ENCODE measurements at regions of chr6 and their contacts with region 1.

Region 1: DNA sequence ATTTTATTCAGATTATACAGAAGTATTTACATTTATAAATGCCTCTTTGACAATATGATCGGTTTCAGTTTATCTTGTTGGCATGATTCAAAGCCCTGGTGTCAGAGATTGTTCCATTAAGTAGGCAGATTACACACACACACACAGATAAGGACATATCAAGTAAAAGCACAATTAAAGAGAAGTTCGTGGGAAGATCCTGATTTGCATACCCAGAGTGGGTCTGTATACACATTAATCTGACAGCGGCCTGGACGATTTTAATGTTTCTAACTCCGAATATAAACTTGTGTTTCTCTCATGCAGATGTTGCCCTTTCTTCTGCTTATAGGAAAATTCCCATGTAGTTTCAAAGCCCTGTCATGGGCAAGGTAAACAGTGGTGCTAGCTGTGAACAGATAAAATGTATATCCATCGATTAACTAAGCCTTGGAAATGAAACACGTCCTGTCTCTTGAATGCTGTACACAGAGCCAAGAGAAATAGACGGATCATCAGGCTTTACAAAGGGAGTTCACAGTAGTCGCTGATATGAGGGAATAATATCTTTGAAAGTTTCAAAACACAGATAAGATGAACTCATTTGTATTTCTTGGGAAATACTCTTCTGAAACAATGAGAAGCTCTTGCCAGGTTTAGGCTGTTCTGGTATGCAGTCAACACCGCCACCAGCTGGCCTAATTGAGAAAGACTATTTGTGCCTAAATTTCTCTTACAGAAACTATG is 108.2 kb upstream of the GMDS start:
- DNase-seq: peak; percentile 80
- ATAC-seq: no peak
- H3K4me3 Mint-ChIP-seq: no peak overlapping the region
- H3K27ac Mint-ChIP-seq: no peak overlapping the region
- H3K4me1 Mint-ChIP-seq: no peaks in the 10 kb centered on the region
- H3K27me3 Mint-ChIP-seq: no peaks in the 10 kb centered on the region

Region 2: DNA sequence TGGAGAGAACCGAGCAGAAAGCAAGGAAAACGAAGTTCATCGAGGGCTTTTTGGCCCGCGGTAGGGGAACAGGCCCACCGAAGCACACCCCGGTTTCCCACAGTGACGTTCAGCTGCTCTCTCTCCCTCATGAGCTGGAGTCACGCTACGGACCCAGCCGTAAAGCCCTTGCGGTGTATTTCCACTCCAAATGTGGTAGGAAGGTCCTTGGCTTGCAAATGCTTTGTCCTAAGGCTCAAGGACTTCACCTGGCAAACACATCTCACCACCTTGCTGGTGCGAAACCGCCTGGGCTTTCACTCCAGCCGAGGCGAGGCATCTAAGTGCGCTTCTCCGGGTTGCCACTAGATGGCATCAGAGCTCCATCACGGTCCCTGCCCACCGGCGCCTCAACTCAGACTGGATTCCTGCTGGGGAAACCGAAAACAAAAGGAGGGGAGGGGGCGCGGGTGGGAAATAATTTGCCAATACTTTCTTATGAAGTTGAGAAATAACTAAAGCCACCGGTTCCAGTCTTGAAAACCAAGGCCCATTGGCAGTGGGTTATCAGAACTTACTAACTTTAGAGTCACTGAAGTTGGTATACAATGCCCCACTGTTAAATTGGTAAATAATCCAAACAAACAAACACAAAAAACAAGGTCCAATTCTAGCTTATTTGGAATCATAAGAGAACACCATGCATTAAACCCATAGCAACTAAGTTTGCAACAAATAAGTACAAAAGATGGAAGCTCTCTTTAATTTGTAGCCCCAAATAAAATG is 757.3 kb before region 1 on chr6:
- CTCF ChIA-PET with region 1: interaction called, 31 read pairs
- POLR2A ChIA-PET with region 1: no interaction called
- intact Hi-C with region 1: loop called in 1 of 2 experiments (anchors 2 kb)
- DNase-seq: peak; percentile 78
- ATAC-seq: peak; percentile 88
- H3K4me3 Mint-ChIP-seq: no peak overlapping the region
- H3K27ac Mint-ChIP-seq: no peak overlapping the region
- H3K4me1 Mint-ChIP-seq: peaks cover 2% of the 10 kb centered on the region
- H3K27me3 Mint-ChIP-seq: peaks cover 48% of the 10 kb centered on the region

Region 3: DNA sequence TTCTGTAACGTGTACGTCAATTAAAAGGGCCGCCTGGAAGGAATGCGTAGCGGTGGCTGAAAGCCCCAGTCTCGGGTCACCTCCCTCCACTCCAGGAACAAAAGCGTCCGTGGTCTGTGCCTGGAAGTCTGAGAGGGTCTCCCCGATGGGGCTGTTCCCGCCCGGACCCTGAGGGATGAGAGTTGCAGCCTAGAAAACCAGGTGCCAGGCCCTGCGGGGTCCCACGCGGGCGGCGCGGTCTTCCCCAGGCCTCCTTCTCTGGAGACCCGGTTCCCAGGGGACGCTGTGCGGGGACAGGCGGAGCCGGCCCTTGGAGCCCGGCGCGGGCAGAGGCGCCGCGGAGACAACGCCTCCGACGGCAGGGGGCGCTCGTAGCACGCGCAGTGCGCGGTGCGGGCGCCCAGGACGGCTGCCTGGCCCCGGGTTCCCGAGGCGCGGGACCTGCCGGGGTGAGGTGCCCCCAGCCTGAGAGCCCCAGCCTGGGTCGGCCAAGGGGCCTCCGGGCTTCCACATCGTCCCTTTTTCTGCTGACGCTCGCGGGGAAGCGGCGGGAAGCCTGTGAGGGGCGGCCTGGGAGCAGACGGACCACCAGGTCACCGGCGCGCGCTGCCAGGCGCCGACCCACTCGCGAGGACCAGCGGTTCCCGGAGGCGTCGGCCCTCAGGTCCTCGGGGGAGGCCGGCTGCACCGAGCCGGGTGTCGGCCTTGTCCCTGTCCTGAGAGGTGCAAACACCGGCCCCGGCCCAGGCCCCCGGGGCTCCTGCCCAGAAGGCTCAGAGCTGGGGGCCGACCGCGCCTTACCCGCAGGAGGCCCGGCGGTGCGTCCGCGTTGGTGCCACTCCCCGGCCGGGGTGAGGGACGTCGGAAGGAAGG is 749.2 kb before region 1 on chr6:
- CTCF ChIA-PET with region 1: interaction called, 16 read pairs
- POLR2A ChIA-PET with region 1: no interaction called
- intact Hi-C with region 1: loop called (anchors 1 kb)
- DNase-seq: peak; percentile 82
- ATAC-seq: peak; percentile 84
- H3K4me3 Mint-ChIP-seq: no peak overlapping the region
- H3K27ac Mint-ChIP-seq: no peak overlapping the region
- H3K4me1 Mint-ChIP-seq: peaks cover 30% of the 10 kb centered on the region
- H3K27me3 Mint-ChIP-seq: peaks cover 77% of the 10 kb centered on the region

Region 4: GRCh38 chr6:1624851-1625781 is 728.5 kb before region 1 on chr6:
- CTCF ChIA-PET with region 1: interaction called, 10 read pairs
- POLR2A ChIA-PET with region 1: no interaction called
- intact Hi-C with region 1: no loop called
- DNase-seq: peak; percentile 25
- ATAC-seq: peak; percentile 11
- H3K4me3 Mint-ChIP-seq: peak overlapping the region; percentile 56
- H3K27ac Mint-ChIP-seq: no peak overlapping the region
- H3K4me1 Mint-ChIP-seq: peaks cover 11% of the 10 kb centered on the region
- H3K27me3 Mint-ChIP-seq: peaks cover 56% of the 10 kb centered on the region

Region 5: DNA sequence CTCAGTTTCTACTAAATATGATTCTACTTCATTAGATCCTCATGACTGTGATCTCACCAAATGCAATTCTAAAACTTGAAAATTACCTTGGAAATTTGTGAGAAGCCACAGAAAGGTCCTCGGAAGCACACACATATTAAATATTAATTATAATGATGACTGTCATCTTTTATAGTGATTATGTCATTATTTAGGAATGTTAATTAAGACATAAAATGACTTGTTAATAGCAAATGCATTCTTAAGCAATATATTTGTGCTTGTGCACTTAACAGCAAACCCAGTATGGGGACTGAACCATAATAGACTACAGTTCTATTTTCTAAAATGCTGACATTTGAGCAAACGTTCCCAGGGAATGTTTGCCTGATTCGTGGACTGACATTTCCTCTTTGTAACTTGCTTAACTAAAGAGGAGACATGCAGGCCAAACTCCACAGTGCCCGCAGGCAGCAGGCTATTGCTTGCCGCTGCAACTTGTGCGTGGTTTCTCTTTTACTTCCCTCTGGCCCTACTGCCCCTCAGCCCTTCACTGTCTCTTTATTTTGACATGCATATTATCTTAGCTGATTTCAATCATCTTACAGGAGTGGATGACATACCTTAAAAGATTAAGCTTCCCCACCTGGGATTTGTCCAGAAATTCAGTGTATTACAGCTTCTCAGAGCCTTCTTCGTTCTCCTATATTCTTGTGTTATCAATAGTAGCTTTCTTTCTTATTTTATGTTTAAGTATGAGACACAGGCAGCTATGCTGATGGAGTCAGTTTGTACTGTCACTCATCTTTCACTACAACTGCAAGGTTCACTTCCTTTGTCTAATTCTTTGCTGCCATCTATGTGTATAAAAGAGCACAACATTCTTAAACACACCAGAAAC is 249.7 kb before region 1 on chr6:
- CTCF ChIA-PET with region 1: interaction called, 5 read pairs
- POLR2A ChIA-PET with region 1: no interaction called
- intact Hi-C with region 1: loop called in 1 of 2 experiments (anchors 2 kb)
- DNase-seq: no peak
- ATAC-seq: peak; percentile 63
- H3K4me3 Mint-ChIP-seq: no peak overlapping the region
- H3K27ac Mint-ChIP-seq: no peak overlapping the region
- H3K4me1 Mint-ChIP-seq: no peaks in the 10 kb centered on the region
- H3K27me3 Mint-ChIP-seq: no peaks in the 10 kb centered on the region

Region 6: DNA sequence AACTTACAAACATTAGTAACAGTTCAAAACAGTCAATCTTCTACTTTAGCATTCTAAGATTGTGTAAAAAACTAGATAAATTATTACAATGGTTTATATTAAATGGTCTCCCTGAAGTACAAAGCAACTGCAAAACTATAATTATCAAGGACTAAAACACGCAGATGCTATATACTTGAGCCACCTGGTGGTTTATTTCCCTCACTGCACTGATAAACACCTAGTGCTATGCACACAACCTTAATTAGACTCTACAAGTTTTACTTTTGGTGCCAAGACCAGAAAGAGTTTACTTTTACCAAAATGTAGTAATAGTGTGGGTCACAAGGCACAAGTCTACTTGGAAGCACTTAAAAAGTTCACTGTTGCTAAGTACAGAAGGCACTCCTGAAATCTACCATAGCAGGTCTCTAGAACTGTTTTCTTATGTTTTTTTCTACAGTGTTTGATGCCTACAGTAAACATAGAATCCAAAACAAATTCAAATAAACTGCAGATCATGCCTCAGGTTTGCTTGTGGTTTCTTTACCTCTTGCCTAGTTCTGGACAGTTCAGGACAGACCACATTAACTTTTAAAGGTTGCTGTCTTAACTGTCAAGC is 157.4 kb before region 1 on chr6:
- CTCF ChIA-PET with region 1: interaction called, 3 read pairs
- POLR2A ChIA-PET with region 1: no interaction called
- intact Hi-C with region 1: loop called in 1 of 2 experiments (anchors 2 kb)
- DNase-seq: peak; percentile 34
- ATAC-seq: peak; percentile 76
- H3K4me3 Mint-ChIP-seq: no peak overlapping the region
- H3K27ac Mint-ChIP-seq: no peak overlapping the region
- H3K4me1 Mint-ChIP-seq: no peaks in the 10 kb centered on the region
- H3K27me3 Mint-ChIP-seq: peaks cover 2% of the 10 kb centered on the region

Region 7: GRCh38 chr6:2209226-2209809 is 144.3 kb before region 1 on chr6:
- CTCF ChIA-PET with region 1: interaction called, 11 read pairs
- POLR2A ChIA-PET with region 1: no interaction called
- intact Hi-C with region 1: loop called in 1 of 2 experiments (anchors 1 kb)
- DNase-seq: peak; percentile 60
- ATAC-seq: peak; percentile 66
- H3K4me3 Mint-ChIP-seq: no peak overlapping the region
- H3K27ac Mint-ChIP-seq: no peak overlapping the region
- H3K4me1 Mint-ChIP-seq: no peaks in the 10 kb centered on the region
- H3K27me3 Mint-ChIP-seq: no peaks in the 10 kb centered on the region

Region 8: GRCh38 chr6:2656460-2657079 is 303.0 kb after region 1 on chr6:
- CTCF ChIA-PET with region 1: no interaction called
- POLR2A ChIA-PET with region 1: no interaction called
- intact Hi-C with region 1: no loop called
- DNase-seq: no peak
- ATAC-seq: no peak
- H3K4me3 Mint-ChIP-seq: no peak overlapping the region
- H3K27ac Mint-ChIP-seq: no peak overlapping the region
- H3K4me1 Mint-ChIP-seq: peaks cover 7% of the 10 kb centered on the region
- H3K27me3 Mint-ChIP-seq: peaks cover 10% of the 10 kb centered on the region